ENCODE measurements at regions of chr16 and their contacts with region 1.

Region 1: GRCh38 chr16:30805370-30806169 is 18.6 kb upstream of the ZNF629 start:
- DNase-seq: peak; percentile 74
- ATAC-seq: peak; percentile 96
- H3K4me3 ChIP-seq: peak overlapping the region; percentile 76
- H3K27ac ChIP-seq: peak overlapping the region; percentile 85
- H3K4me1 ChIP-seq: peaks cover 8% of the 10 kb centered on the region
- H3K27me3 ChIP-seq: no peaks in the 10 kb centered on the region
- CTCF ChIP-seq: no peak
- POLR2A ChIP-seq: peak; percentile 82
- RAD21 ChIP-seq: no peak

Region 2: DNA sequence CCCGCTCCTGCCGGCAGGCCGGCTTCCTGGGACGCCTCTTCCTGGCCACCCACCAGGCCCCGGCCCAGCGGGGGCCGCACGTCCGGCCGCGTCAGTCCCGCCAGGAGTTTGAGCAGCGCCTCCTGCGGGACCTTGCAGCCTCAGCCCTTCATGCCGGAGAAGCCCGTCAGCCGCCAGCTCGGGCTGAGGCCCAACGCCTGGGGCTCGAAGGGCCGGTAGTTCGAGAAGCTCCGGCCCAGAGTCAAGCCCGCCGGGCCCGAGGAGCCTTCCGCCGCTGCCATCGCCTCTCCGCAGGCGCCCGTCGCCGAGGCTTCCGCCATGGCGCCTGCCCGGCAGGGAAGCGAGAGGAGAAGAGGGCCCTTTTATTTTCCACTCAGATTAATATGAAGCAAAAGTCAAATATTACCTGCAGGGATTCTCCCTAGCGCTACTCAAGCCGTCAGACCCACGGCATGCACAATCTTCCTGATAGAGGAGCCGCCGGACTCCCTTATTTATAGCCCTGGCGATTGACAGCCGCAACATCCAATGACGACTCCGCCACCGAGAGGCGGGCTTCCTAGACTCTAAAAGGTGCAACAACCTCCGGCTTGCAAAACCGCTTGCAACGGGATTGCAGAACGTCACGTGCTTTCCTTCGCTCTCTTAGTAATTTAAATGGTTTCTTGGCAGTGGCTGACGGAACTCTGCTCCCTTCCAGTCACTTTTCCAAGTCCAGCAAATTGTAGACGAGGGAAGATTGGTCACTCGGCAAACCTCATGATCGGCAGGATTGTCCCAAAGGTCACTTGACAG is 360.0 kb before region 1 on chr16 and contains the start of gene SEPHS2:
- CTCF ChIA-PET with region 1: no interaction called
- POLR2A ChIA-PET with region 1: no interaction called
- dilution Hi-C with region 1: no loop called
- in situ Hi-C with region 1: no loop called
- intact Hi-C with region 1: no loop called
- DNase-seq: peak; percentile 97
- ATAC-seq: peak; percentile 97
- H3K4me3 ChIP-seq: peak within 1 kb of the TSS; percentile 65
- H3K27ac ChIP-seq: peak within 1 kb of the TSS; percentile 61
- H3K4me1 ChIP-seq: peaks cover 5% of the 10 kb centered on the region
- H3K27me3 ChIP-seq: no peaks in the 10 kb centered on the region
- CTCF ChIP-seq: peak; percentile 57
- POLR2A ChIP-seq: peak; percentile 95
- RAD21 ChIP-seq: peak; percentile 35
- total RNA-seq, gene SEPHS2: 10.4 and 10.6 TPM in 2 replicates

Region 3: GRCh38 chr16:30775392-30776188 is 30.0 kb before region 1 on chr16:
- CTCF ChIA-PET with region 1: interaction called, 5 read pairs
- POLR2A ChIA-PET with region 1: interaction called, 16 read pairs
- dilution Hi-C with region 1: no loop called
- in situ Hi-C with region 1: no loop called
- intact Hi-C with region 1: no loop called
- DNase-seq: peak; percentile 76
- ATAC-seq: peak; percentile 83
- H3K4me3 ChIP-seq: peak overlapping the region; percentile 68
- H3K27ac ChIP-seq: peak overlapping the region; percentile 79
- H3K4me1 ChIP-seq: peaks cover 13% of the 10 kb centered on the region
- H3K27me3 ChIP-seq: no peaks in the 10 kb centered on the region
- CTCF ChIP-seq: no peak
- POLR2A ChIP-seq: no peak
- RAD21 ChIP-seq: no peak

Region 4: DNA sequence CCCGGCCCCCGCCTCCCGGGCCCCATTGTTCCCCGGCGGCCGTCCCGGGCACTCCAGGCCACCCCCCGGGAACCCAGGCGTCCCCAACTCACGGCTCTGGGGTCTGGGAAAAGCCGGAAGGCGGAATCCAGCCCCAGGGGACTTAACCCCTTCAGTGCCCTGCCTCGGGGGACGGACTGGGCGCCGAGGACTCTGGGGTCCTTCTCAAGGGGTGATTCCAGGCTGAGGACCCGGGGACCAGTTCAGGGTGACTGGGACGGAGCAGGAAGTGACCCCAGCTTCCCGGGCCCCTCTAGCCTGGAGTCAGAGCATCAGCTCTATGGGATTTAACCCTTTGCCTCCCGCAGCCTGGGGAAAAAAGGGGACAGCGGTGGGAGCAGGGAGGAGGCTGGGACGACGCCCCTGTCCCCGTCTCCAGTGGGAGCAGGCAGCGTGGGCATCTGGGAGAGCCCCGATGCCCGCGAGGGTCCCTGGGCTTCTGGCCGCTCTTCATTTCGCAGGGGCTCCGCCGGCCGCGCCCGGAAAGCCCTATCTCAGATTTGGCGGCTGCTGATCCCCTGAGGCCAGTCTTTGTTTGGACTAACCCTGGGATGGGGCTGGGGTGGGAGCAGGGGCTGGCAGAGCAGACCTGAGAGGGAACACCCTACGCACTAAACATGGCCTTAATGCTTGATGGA is 18.5 kb before region 1 on chr16 and contains the start of gene ZNF629:
- CTCF ChIA-PET with region 1: no interaction called
- POLR2A ChIA-PET with region 1: interaction called, 13 read pairs
- dilution Hi-C with region 1: no loop called
- in situ Hi-C with region 1: no loop called
- intact Hi-C with region 1: loop called (anchors 1 kb)
- DNase-seq: peak; percentile 57
- ATAC-seq: peak; percentile 88
- H3K4me3 ChIP-seq: peak within 1 kb of the TSS; percentile 96
- H3K27ac ChIP-seq: peak within 1 kb of the TSS; percentile 96
- H3K4me1 ChIP-seq: peaks cover 4% of the 10 kb centered on the region
- H3K27me3 ChIP-seq: 0 out of 2 replicates have a peak, but pooled peaks cover 2% of the 10 kb centered on the region
- CTCF ChIP-seq: no peak
- POLR2A ChIP-seq: 0 out of 2 replicates have a peak, but pooled peaks have one; percentile 22
- RAD21 ChIP-seq: 0 out of 2 replicates have a peak, but pooled peaks have one; percentile 3
- total RNA-seq, gene ZNF629: 9.1 and 9.4 TPM in 2 replicates